ENCODE measurements at regions of chr20 and their contacts with region 1.

Region 1: GRCh38 chr20:35454881-35455609 is at the start of gene CEP250:
- DNase-seq: peak; percentile 95
- ATAC-seq: peak; percentile 93
- H3K4me3 Mint-ChIP-seq: peak within 1 kb of the TSS; percentile 90
- H3K27ac Mint-ChIP-seq: peak within 1 kb of the TSS; percentile 96
- H3K4me1 Mint-ChIP-seq: peaks cover 24% of the 10 kb centered on the region
- H3K27me3 Mint-ChIP-seq: no peaks in the 10 kb centered on the region
- total RNA-seq, gene CEP250: 82.9 to 84.5 TPM

Region 2: GRCh38 chr20:35404614-35405259 is 50.3 kb before region 1 on chr20:
- POLR2A ChIA-PET with region 1: no interaction called
- DNase-seq: no peak
- ATAC-seq: peak; percentile 99
- H3K4me3 Mint-ChIP-seq: peak overlapping the region; percentile 58
- H3K27ac Mint-ChIP-seq: peak overlapping the region; percentile 85
- H3K4me1 Mint-ChIP-seq: peaks cover 16% of the 10 kb centered on the region
- H3K27me3 Mint-ChIP-seq: no peaks in the 10 kb centered on the region

Region 3: DNA sequence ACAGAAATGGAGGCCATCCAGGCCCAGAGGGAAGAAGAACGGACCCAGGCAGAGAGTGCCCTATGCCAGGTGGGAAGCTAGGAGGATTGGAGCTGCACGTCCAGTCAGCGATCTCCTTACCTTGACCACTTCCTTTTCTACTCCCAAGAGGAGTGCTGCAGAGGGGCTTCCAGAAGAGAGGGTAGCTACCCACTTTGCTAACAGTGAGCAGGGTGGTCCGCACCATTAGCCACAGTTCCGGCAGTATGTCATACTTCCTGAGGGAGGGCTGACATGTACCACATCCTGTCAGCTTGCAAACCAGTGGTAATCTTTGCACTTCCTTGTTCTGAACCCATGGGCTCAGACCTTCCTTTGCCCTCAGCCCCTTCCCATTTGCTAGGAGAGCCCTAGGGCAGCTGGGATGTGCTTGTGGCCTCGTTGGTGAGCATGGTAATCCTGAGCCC is 35.7 kb after region 1 on chr20:
- POLR2A ChIA-PET with region 1: interaction called, 30 read pairs
- DNase-seq: peak; percentile 70
- ATAC-seq: peak; percentile 98
- H3K4me3 Mint-ChIP-seq: peak overlapping the region; percentile 99
- H3K27ac Mint-ChIP-seq: peak overlapping the region; percentile 99
- H3K4me1 Mint-ChIP-seq: peaks cover 33% of the 10 kb centered on the region
- H3K27me3 Mint-ChIP-seq: no peaks in the 10 kb centered on the region